Activated naive CD4-positive, alpha-beta T cell treated with anti-CD3 and anti-CD28 coated beads for 36 hours (primary cell): ENCODE measurements at regions of chr14 and their contacts with region 1.

Region 1: DNA sequence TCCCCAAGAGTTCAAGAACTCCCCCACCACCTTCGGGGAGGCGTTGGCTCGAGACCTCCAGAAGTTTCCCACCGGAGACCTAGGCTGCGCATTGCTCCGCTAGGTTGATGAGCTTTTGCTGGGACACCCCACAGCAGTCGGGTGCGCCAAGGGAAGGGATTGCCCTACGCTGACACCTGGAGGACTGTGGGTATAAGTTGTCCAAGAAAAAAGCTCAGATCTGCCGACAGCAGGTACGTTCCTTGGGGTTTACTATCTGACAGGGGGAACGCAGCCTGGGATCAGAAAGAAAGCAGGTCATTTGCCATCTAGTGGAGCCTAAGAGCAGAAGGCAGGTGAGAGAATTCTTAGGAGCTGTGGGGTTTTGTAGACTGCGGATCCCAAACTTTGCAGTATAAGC is 98.8 kb downstream of the FRMD6 start:
- DNase-seq: peak; percentile 42
- H3K4me3 Mint-ChIP-seq: no peak overlapping the region
- H3K27ac Mint-ChIP-seq: no peak overlapping the region
- H3K4me1 Mint-ChIP-seq: no peaks in the 10 kb centered on the region
- H3K27me3 Mint-ChIP-seq: no peaks in the 10 kb centered on the region

Region 2: DNA sequence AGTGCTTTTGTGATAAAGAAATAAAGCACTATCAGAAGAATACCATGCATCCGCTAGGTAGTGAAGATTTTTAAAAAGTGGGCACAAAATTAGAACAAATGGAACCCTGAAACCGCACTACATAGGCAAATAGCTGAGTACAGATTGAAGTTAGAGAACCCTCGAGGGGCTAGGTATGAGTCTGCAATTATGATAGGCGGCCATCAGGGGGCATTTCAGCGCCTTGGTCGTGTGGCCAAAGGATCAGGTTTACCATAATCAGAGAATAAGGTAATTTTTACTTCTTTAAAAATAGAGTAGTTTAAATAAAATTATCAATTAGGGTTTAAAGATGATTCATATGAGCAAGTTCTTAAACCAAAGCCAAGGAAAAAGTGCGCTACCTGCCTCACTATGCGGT is 380.7 kb before region 1 on chr14:
- CTCF ChIA-PET with region 1: no interaction called
- intact Hi-C with region 1: loop called (anchors 1 kb)
- DNase-seq: peak; percentile 50
- H3K4me3 Mint-ChIP-seq: no peak overlapping the region
- H3K27ac Mint-ChIP-seq: no peak overlapping the region
- H3K4me1 Mint-ChIP-seq: no peaks in the 10 kb centered on the region
- H3K27me3 Mint-ChIP-seq: peaks cover 2% of the 10 kb centered on the region

Region 3: DNA sequence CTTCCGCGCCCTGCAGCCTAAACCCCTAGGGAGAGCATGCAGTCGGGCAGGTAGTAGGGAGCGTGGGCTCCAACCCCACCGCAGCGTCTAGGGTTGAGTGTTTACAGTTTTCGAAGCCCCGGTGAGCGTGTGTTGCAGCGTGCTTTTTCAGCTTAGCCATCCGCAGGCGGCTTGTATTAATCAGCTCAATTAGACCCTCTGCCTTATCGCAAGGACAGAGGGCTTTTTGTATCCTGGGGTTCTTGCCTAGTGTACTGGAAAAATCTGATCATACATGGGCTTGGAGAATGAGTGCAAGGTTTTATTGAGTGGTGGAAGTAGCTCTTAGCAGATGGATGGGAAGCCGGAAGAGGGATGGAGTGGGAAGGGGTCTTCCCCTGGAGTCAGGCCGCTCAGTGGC is 65.5 kb after region 1 on chr14:
- CTCF ChIA-PET with region 1: no interaction called
- intact Hi-C with region 1: no loop called
- DNase-seq: no peak
- H3K4me3 Mint-ChIP-seq: no peak overlapping the region
- H3K27ac Mint-ChIP-seq: no peak overlapping the region
- H3K4me1 Mint-ChIP-seq: no peaks in the 10 kb centered on the region
- H3K27me3 Mint-ChIP-seq: no peaks in the 10 kb centered on the region

Region 4: GRCh38 chr14:52241087-52241793 is 490.7 kb after region 1 on chr14:
- CTCF ChIA-PET with region 1: no interaction called
- intact Hi-C with region 1: no loop called
- DNase-seq: no peak
- H3K4me3 Mint-ChIP-seq: no peak overlapping the region
- H3K27ac Mint-ChIP-seq: no peak overlapping the region
- H3K4me1 Mint-ChIP-seq: peaks cover 4% of the 10 kb centered on the region
- H3K27me3 Mint-ChIP-seq: no peaks in the 10 kb centered on the region